HCT116 (cell line): ENCODE measurements at regions of chr16 and their contacts with region 1.

Region 1: DNA sequence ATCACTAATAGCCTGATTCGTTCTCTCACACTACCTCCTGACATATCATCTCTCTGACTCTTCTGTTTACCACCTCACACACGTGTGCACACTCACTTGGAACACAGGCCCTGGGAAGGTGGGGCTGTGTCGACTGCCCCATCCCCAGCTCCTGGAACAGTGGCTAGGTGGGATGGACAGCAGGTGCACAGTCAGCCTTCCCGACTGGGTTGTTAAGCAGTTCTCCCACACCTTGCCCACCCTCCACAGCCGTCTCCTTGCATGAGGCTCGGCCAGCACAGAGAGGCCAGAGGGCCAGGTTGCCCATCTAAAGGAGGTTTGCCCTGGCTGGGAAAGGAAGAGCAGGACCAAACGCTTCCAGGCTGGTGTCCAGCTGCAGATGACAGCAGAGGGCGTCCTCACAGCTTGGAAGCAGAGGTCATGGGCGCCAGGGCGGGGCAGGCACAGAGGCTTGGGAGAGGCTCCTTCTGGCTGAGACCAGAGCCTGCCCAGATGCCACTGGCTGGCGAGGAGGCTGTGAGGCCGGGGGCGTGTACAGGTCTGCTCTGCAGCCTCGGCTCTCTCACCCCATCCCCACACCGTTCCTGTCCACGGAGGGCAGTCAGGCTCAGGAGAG is 92.8 kb downstream of the AMFR start:
- DNase-seq: peak; percentile 65
- ATAC-seq: peak; percentile 97
- H3K4me3 ChIP-seq: no peak overlapping the region
- H3K27ac ChIP-seq: no peak overlapping the region
- H3K4me1 ChIP-seq: peaks cover 3 to 11% of the 10 kb centered on the region in 2 experiments; a peak in 3 of 4 replicates
- H3K27me3 ChIP-seq: no peaks in the 10 kb centered on the region
- CTCF ChIP-seq: peak; percentile 51 to 89 (median 62)
- POLR2A ChIP-seq: no peak
- RAD21 ChIP-seq: peak; percentile 92

Region 2: DNA sequence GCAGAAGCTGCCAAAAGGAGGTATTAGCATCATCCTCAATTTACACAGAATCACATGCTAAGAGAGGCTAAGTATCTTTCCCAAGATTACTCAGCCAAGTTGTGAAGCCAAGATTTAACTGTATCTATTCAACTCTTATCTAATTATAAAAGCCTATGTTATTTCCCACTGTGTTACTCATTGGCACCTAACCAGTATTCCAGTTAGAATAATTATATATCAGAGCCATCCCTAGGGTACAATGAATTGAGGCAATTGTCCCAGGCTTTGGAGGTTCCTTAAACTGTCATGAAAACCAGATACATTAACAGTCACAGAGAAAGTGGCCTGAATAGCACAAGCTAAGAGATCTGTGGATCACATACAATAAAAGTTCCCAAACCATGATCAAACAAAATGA is 103.7 kb after region 1 on chr16:
- CTCF ChIA-PET with region 1: no interaction called
- POLR2A ChIA-PET with region 1: no interaction called
- RAD21 ChIA-PET with region 1: no interaction called
- intact Hi-C with region 1: no loop called
- DNase-seq: no peak
- ATAC-seq: no peak
- H3K4me3 ChIP-seq: no peak overlapping the region
- H3K27ac ChIP-seq: no peak overlapping the region
- H3K4me1 ChIP-seq: no peaks in the 10 kb centered on the region
- H3K27me3 ChIP-seq: no peaks in the 10 kb centered on the region
- CTCF ChIP-seq: no peak
- POLR2A ChIP-seq: no peak
- RAD21 ChIP-seq: no peak

Region 3: DNA sequence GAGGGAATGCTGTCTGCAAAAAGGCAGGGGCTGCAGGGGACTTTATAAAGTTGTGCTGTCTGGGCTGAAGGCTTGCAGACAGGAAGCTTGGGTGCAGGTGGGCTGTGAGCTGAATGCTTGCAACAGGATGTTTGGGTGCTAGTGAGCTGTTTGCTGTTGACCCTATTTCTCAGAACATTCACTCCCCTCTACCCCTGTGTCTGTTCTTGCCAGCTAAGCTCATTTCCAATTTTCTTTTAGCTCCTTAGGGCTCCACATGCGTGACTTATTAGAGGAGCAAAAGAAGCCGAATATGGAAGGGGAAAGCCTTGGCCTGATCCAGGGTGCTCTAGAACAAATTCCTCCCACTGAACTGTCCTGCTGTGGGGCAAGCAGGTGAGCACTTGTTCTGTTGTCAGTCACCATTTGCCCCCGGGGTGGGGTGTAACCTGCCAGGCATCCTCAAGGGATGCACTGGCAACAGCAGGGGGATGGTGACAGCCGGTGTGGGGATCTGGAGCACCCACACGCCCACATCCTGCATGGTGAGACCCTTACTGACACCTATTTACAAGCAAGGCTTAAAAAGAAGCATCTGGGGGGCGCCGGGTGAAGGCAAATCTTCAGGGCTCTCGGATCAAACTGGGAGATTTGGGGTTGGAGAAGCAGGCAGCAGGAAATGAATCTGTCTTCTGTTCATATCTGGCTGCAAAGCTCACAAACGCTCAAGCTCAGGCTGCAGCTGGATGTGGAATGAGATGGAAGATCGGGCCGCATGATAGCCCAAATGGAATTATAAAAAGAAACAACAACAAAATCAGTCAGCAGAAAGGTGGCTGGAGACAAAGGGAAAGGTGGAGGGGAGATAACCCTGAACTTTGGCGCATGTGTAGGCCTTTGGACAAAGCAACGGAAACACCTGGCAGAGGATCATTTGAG is 376.2 kb after region 1 on chr16:
- CTCF ChIA-PET with region 1: no interaction called
- POLR2A ChIA-PET with region 1: no interaction called
- RAD21 ChIA-PET with region 1: no interaction called
- intact Hi-C with region 1: loop called (anchors 10 kb)
- DNase-seq: no peak
- ATAC-seq: no peak
- H3K4me3 ChIP-seq: no peak overlapping the region
- H3K27ac ChIP-seq: no peak overlapping the region
- H3K4me1 ChIP-seq: no peaks in the 10 kb centered on the region
- H3K27me3 ChIP-seq: no peaks in the 10 kb centered on the region
- CTCF ChIP-seq: no peak
- POLR2A ChIP-seq: no peak
- RAD21 ChIP-seq: no peak